OCI-LY7 (cell line): ENCODE measurements at regions of chr17 and their contacts with region 1.

Region 1: DNA sequence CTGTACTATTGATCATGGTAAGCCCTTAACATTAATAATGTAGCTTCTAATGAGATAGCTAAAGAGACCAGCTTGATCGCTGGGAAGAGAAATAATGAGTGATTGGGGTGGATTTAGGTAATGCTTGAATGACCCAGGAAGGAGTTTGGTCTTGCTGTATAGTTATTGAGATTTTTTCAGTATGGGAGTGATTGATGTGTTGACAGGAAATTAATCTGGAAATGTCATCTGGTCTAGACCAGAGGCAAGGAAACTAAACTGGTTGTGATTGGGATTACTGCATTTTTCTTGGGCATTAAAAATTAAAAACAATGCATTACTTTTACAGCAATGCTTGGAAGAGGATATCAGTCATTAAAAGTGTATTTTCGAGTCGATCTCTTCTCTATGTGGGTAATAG is 11.8 kb downstream of the TEFM start:
- DNase-seq: no peak
- H3K4me3 ChIP-seq: no peak overlapping the region
- H3K27ac ChIP-seq: no peak overlapping the region
- H3K4me1 ChIP-seq: no peaks in the 10 kb centered on the region
- CTCF ChIP-seq: no peak

Region 2: GRCh38 chr17:30534938-30535921 is 359.0 kb before region 1 on chr17:
- CTCF ChIA-PET with region 1: no interaction called
- POLR2A ChIA-PET with region 1: no interaction called
- intact Hi-C with region 1: no loop called
- DNase-seq: no peak
- H3K4me3 ChIP-seq: no peak overlapping the region
- H3K27ac ChIP-seq: no peak overlapping the region
- H3K4me1 ChIP-seq: no peaks in the 10 kb centered on the region
- CTCF ChIP-seq: no peak

Region 3: GRCh38 chr17:30858561-30859245 is 35.5 kb before region 1 on chr17:
- CTCF ChIA-PET with region 1: no interaction called
- POLR2A ChIA-PET with region 1: no interaction called
- intact Hi-C with region 1: loop called (anchors 5 kb)
- DNase-seq: no peak
- H3K4me3 ChIP-seq: no peak overlapping the region
- H3K27ac ChIP-seq: no peak overlapping the region
- H3K4me1 ChIP-seq: no peaks in the 10 kb centered on the region
- CTCF ChIP-seq: no peak